ENCODE measurements at regions of chr5 and their contacts with region 1.

Region 1: DNA sequence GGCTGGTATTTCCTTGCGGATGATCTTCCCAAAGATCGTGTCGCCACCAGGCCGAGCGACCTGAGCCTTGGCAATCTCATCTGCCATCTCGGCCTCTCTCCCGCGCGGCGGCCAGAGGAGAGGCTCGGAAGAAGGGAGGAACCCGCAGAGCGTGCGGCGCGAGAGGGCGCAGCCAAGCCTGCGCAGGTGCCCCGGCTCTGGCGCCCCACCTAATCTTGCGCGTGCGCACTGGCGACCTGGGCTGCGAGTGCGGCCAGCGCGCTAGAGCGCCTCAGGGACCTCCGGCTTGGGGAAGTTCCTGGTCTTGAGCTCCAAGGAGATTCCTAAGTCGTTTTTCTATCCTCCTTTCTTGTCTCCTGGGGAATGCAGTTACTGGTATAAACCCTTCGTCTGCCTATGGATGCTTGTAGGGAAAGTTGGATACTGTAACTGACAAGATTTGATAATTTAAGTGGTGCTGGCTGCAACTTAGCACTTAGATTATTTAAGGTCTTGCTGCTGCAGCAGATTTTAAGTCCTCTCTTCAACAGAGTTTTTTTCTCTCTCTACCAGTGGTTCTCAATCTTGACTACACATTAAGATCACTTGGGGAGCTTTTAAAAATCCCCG is at the start of gene HINT1:
- DNase-seq: peak; percentile 88 to 99 (median 94)
- ATAC-seq: peak; percentile 92 to 95 (median 94)
- H3K4me3 ChIP-seq: peak within 1 kb of the TSS; percentile 80 to 92 (median 84)
- H3K27ac ChIP-seq: peak within 1 kb of the TSS; percentile 81 to 94 (median 92)
- H3K4me1 ChIP-seq: peaks cover 0 to 18% (median 6%) of the 10 kb centered on the region in 3 donors
- H3K27me3 ChIP-seq: no peaks in the 10 kb centered on the region
- CTCF ChIP-seq: no peak
- total RNA-seq, gene HINT1: 47.9 to 90.4 (median 65.5) TPM

Region 2: GRCh38 chr5:130720355-130720754 is 444.9 kb before region 1 on chr5:
- intact Hi-C with region 1: no loop called
- DNase-seq: no peak
- ATAC-seq: peak in 3 of 4 donors; percentile 54 to 62 (median 58)
- H3K4me3 ChIP-seq: no peak overlapping the region
- H3K27ac ChIP-seq: no peak overlapping the region
- H3K4me1 ChIP-seq: no peaks in the 10 kb centered on the region
- H3K27me3 ChIP-seq: no peaks in the 10 kb centered on the region
- CTCF ChIP-seq: peak in 2 of 4 donors; percentile 7 to 14

Region 3: DNA sequence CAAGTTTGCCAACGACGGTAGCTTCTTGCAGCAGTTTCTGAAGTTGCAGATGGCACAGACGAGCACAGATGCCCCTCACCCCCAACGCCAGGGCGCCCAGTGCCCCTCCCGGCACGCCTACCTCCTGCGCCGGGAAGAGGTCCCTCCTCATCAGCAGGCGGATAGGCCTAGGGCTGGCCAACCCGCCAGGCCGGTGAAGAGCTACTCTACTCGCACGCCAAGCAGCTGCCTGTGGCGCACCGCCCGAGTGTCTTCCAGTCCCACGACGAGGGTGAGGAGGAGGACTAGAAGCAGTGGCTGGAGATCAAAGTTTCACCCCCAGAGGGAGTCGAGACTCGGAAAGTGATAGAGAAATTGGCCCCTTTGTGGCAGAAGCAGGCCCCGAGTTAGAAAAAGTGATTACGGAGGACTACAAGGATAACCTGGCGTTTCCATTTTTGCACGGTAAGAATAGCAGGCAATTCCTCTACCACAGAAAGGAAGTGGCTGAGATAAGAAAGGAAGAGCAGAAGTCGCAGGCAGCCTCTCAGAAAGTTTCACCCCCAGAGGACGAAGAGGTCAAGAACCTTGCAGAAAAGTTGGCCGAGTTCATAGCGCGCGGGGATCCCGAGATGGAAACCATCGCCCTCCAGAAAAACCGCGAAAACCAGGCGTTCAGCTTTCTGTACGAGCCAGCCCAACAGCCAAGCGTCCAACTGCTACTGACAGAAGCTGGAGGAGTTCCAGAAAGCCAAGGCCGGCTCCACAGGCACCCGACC is 170.5 kb before region 1 on chr5:
- intact Hi-C with region 1: no loop called
- DNase-seq: peak in 1 of 6 donors; percentile 45
- ATAC-seq: no peak
- H3K4me3 ChIP-seq: no peak overlapping the region
- H3K27ac ChIP-seq: no peak overlapping the region
- H3K4me1 ChIP-seq: no peaks in the 10 kb centered on the region
- H3K27me3 ChIP-seq: no peaks in the 10 kb centered on the region
- CTCF ChIP-seq: no peak

Region 4: DNA sequence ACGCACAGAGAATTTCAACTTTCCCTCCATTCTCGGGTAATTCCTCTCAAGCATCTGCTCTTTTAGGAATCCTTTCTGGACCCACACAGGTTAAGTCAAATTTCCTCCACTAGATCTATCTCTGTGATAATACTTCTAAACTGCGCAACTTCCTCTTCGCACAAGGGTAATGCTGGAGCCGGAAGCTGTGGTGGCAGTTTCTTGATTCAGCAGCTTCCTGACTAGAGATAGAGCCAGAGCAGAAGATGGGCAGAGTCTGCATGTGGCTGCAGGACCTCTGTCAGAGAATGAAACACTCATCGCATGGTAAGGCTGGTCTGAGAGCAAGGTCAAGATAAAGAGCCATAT is 87.6 kb after region 1 on chr5:
- intact Hi-C with region 1: loop called in 1 of 3 experiments (anchors 10 kb)
- DNase-seq: peak in 1 of 6 donors; percentile 46
- ATAC-seq: peak in 3 of 4 donors; percentile 56 to 86 (median 82)
- H3K4me3 ChIP-seq: no peak overlapping the region
- H3K27ac ChIP-seq: peak overlapping the region in 2 of 4 donors; percentile 2 to 39
- H3K4me1 ChIP-seq: no peaks in the 10 kb centered on the region
- H3K27me3 ChIP-seq: no peaks in the 10 kb centered on the region
- CTCF ChIP-seq: no peak

Region 5: DNA sequence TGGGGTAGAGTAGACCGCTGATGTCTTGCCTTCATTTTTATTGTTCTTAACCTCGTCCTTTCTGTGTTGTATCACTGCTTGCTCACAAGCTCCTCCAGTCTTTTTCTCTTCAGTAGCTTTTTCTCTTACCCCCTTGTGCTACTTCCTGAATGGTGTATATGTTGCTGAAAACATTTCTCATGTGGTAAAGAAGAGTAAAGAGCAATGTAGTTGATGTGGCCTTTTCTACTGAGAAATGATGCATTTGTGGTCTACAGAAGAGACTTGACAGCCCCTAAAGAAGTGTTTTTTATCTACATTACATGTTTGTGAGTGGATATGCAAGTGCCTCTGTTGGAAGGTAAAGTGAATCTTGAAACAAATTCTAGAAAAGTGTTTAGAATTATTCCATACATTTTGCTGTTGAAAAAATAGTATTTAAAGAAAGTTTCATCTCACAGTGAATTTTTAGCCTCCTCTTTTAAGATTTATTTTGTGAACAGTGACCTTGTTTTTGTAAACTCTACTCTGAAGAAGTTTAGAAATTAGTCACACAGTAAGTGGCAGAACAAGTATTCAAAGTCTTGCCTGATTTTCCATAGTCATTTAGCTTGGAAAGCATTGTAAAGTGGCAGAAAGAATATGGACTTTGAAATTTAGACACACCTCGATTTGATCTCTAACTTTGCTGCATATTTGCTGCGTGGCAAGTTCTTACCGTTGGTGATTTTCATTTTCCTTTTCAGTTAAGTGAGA is 116.1 kb after region 1 on chr5:
- intact Hi-C with region 1: no loop called
- DNase-seq: no peak
- ATAC-seq: peak in 3 of 4 donors; percentile 40 to 70 (median 54)
- H3K4me3 ChIP-seq: no peak overlapping the region
- H3K27ac ChIP-seq: peak overlapping the region in 2 of 4 donors; percentile 25 to 35
- H3K4me1 ChIP-seq: peaks cover 11 to 33% (median 18%) of the 10 kb centered on the region in 3 donors
- H3K27me3 ChIP-seq: no peaks in the 10 kb centered on the region
- CTCF ChIP-seq: no peak

Measured in pancreas (tissue), 10 donors.